ENCODE measurements at regions of chr14 and their contacts with region 1.

Region 1: GRCh38 chr14:35374273-35374681 is 30.3 kb downstream of the NFKBIA start:
- DNase-seq: peak; percentile 50
- ATAC-seq: peak; percentile 42
- H3K4me3 ChIP-seq: no peak overlapping the region
- H3K27ac ChIP-seq: peak overlapping the region; percentile 77
- H3K4me1 ChIP-seq: peaks cover 5% of the 10 kb centered on the region
- H3K27me3 ChIP-seq: no peaks in the 10 kb centered on the region
- CTCF ChIP-seq: no peak

Region 2: GRCh38 chr14:35320472-35320871 is 53.8 kb before region 1 on chr14:
- CTCF ChIA-PET with region 1: no interaction called
- POLR2A ChIA-PET with region 1: interaction called, 10 read pairs
- in situ Hi-C with region 1: no loop called
- intact Hi-C with region 1: no loop called
- DNase-seq: no peak
- ATAC-seq: no peak
- H3K4me3 ChIP-seq: no peak overlapping the region
- H3K27ac ChIP-seq: no peak overlapping the region
- H3K4me1 ChIP-seq: no peaks in the 10 kb centered on the region
- H3K27me3 ChIP-seq: no peaks in the 10 kb centered on the region
- CTCF ChIP-seq: no peak